Left cardiac atrium (tissue), 4 donors: ENCODE measurements at regions of chr2 and their contacts with region 1.

Region 1: DNA sequence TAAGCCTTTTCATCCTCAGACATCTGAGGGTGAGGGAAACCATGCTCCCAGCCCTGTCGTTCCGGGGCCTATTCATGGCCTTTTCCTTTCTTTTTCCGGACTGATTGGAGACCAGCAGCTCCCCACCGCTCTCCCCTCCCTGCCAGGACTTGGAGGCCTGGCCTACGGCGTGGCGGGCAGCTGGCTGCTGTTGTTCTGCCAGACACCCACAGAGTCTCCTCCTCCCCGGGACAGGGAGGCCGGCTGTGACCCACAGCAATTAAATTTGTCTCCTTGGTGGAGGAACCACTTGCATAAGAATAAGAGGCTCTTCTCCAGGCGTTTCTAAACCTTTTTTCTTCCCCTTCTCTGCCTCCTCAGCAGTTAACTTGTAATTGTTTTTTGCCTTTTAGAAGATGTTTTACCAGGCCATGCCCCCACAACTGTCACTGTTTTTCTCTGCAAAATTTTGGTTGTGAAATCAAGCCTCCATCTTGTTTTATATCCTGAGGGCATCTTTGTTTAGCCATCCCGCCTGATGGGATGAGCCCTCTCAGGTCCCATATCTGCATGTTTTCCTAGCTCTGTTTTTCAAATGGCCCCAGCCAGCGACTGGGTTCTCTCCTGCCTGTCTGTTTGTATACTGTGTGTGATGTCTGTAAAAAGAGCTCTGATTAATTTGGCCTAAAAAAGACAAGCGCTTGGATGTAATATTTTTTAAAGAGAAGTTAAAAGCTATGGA is 1060.0 kb upstream of the DDX18 start:
- DNase-seq: no peak
- ATAC-seq: peak in 1 of 2 donors; percentile 42

Region 2: GRCh38 chr2:116737951-116738350 is 16.6 kb before region 1 on chr2:
- intact Hi-C with region 1: loop called in 1 of 2 experiments (anchors 2 kb)
- DNase-seq: no peak
- ATAC-seq: no peak